Activated naive CD4-positive, alpha-beta T cell treated with anti-CD3 and anti-CD28 coated beads for 36 hours (primary cell): ENCODE measurements at regions of chr6 and their contacts with region 1.

Region 1: GRCh38 chr6:105981002-105981887 is 104.9 kb upstream of the PRDM1 start:
- DNase-seq: peak; percentile 58
- H3K4me3 Mint-ChIP-seq: peak overlapping the region; percentile 62
- H3K27ac Mint-ChIP-seq: peak overlapping the region; percentile 79
- H3K4me1 Mint-ChIP-seq: peaks cover 26% of the 10 kb centered on the region
- H3K27me3 Mint-ChIP-seq: peaks cover 52% of the 10 kb centered on the region

Region 2: GRCh38 chr6:105646391-105646867 is 334.8 kb before region 1 on chr6:
- CTCF ChIA-PET with region 1: no interaction called
- intact Hi-C with region 1: loop called (anchors 5 kb)
- DNase-seq: peak; percentile 35
- H3K4me3 Mint-ChIP-seq: no peak overlapping the region
- H3K27ac Mint-ChIP-seq: no peak overlapping the region
- H3K4me1 Mint-ChIP-seq: peaks cover 46% of the 10 kb centered on the region
- H3K27me3 Mint-ChIP-seq: peaks cover 20% of the 10 kb centered on the region

Region 3: GRCh38 chr6:105810105-105810921 is 170.9 kb before region 1 on chr6:
- CTCF ChIA-PET with region 1: no interaction called
- intact Hi-C with region 1: loop called (anchors 2 kb)
- DNase-seq: peak; percentile 74
- H3K4me3 Mint-ChIP-seq: no peak overlapping the region
- H3K27ac Mint-ChIP-seq: no peak overlapping the region
- H3K4me1 Mint-ChIP-seq: peaks cover 33% of the 10 kb centered on the region
- H3K27me3 Mint-ChIP-seq: no peaks in the 10 kb centered on the region

Region 4: DNA sequence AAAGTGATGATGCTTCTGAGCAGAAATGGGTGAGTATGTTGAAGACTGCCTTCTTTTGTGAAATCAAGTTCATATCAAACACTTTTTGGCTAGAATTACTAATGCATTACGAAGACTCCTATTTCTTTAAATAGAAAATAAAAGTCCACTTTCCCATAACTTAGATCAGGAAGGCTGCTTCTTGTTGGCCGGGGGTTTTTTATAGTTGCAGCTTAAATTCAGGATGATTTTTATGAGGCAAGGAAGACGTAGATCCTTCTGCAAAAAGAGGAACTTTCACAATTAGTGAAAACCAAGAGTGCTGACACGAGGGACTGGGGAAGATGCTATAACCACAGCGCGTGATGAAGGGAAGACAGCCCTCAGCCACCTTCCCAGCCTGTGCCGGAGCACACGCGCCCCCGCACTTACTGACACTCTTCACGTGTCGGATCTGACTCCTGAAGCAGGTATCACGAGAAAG is 101.2 kb before region 1 on chr6:
- CTCF ChIA-PET with region 1: no interaction called
- intact Hi-C with region 1: loop called (anchors 1 kb)
- DNase-seq: peak; percentile 74
- H3K4me3 Mint-ChIP-seq: peak overlapping the region; percentile 11
- H3K27ac Mint-ChIP-seq: peak overlapping the region; percentile 78
- H3K4me1 Mint-ChIP-seq: peaks cover 25% of the 10 kb centered on the region
- H3K27me3 Mint-ChIP-seq: peaks cover 30% of the 10 kb centered on the region

Region 5: GRCh38 chr6:105920071-105920470 is 61.2 kb before region 1 on chr6:
- CTCF ChIA-PET with region 1: no interaction called
- intact Hi-C with region 1: loop called (anchors 1 kb)
- DNase-seq: no peak
- H3K4me3 Mint-ChIP-seq: no peak overlapping the region
- H3K27ac Mint-ChIP-seq: no peak overlapping the region
- H3K4me1 Mint-ChIP-seq: no peaks in the 10 kb centered on the region
- H3K27me3 Mint-ChIP-seq: no peaks in the 10 kb centered on the region

Region 6: GRCh38 chr6:106103728-106104109 is 122.5 kb after region 1 on chr6:
- CTCF ChIA-PET with region 1: no interaction called
- intact Hi-C with region 1: loop called (anchors 1 kb)
- DNase-seq: peak; percentile 63
- H3K4me3 Mint-ChIP-seq: peak overlapping the region; percentile 20
- H3K27ac Mint-ChIP-seq: peak overlapping the region; percentile 1
- H3K4me1 Mint-ChIP-seq: peaks cover 57% of the 10 kb centered on the region
- H3K27me3 Mint-ChIP-seq: peaks cover 4% of the 10 kb centered on the region